Activated CD4-positive, alpha-beta T cell treated with anti-CD3 and anti-CD28 coated beads, Interleukin-2, amount 10 ng/mL, durations not matched to agents 24 days and 14 days (primary cell): ENCODE measurements at regions of chr16 and their contacts with region 1.

Region 1: GRCh38 chr16:23877107-23878090 is 41.6 kb downstream of the PRKCB start:
- DNase-seq: no peak
- H3K4me3 Mint-ChIP-seq: no peak overlapping the region
- H3K27ac Mint-ChIP-seq: no peak overlapping the region
- H3K4me1 Mint-ChIP-seq: peaks cover 54% of the 10 kb centered on the region
- H3K27me3 Mint-ChIP-seq: no peaks in the 10 kb centered on the region

Region 2: DNA sequence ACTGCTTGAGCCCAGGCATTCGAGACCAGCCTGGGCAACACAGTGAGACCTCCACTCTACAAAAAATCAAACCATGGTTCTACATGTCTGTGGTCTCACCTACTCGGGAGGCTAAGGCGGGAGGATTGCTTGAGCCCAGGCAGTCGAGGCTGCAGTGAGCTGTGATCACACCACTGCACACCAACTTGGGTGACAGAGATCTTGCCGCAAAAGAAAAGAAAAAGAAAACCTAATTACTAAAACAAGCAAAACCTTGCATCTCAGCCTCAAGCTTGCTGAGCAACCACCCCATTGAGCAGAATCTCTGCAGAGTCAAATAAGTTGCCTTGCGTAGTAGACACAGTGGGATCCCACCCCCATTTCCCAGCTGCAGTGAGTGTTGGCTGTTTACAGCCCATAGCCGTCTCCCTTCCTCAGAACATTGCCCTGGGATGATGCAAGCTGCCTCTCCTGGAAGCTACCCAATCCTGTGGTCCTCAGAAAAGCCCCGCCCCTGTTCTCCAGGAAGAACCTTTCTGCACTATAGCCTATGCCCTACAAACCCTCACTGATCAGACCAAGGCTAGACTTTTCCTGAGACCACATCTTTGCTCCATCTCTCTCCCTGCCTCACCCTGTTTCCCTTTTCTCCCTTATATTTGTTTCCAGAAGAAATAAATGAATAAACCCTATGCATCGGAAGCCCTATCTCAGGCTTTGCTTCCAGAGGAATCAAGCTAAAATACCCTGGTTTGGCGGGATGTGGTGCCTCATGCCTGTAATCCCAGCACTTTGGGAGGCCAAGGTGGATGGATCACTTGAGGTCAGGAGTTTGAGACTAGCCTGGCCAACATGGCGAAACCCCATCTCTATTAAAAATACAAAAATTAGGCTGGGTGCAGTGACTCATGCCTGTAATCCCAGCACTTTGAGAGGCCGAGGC is 147.6 kb before region 1 on chr16:
- intact Hi-C with region 1: no loop called
- DNase-seq: no peak
- H3K4me3 Mint-ChIP-seq: no peak overlapping the region
- H3K27ac Mint-ChIP-seq: no peak overlapping the region
- H3K4me1 Mint-ChIP-seq: peaks cover 2% of the 10 kb centered on the region
- H3K27me3 Mint-ChIP-seq: peaks cover 9% of the 10 kb centered on the region

Region 3: GRCh38 chr16:23826528-23827045 is 50.8 kb before region 1 on chr16:
- intact Hi-C with region 1: loop called (anchors 1 kb)
- DNase-seq: peak; percentile 77
- H3K4me3 Mint-ChIP-seq: peak overlapping the region; percentile 41
- H3K27ac Mint-ChIP-seq: peak overlapping the region; percentile 52
- H3K4me1 Mint-ChIP-seq: peaks cover 26% of the 10 kb centered on the region
- H3K27me3 Mint-ChIP-seq: no peaks in the 10 kb centered on the region

Region 4: DNA sequence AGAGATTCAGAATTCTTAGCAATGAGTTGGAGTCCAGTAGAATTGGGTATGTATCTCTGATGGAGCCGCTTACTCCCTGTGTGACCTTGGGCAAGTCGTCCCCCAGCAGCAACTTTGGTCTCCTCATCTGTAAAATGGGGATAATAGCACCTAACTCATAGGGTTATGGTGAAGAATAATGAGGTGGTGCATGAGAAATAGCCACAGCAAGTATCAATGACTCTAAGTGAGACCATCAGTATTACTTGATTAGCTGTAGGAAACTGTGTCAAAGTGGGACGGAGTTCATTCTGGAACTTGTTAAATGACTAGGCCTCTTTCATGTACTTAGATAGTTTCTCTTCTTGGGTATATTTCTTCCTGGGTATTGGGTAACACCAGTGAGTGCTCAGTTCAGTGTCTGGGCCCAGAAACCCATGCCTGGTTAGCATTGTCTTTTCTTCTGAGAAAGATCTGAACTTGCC is 35.2 kb before region 1 on chr16:
- intact Hi-C with region 1: loop called (anchors 1 kb)
- DNase-seq: peak; percentile 73
- H3K4me3 Mint-ChIP-seq: peak overlapping the region; percentile 28
- H3K27ac Mint-ChIP-seq: peak overlapping the region; percentile 87
- H3K4me1 Mint-ChIP-seq: peaks cover 70% of the 10 kb centered on the region
- H3K27me3 Mint-ChIP-seq: no peaks in the 10 kb centered on the region

Region 5: DNA sequence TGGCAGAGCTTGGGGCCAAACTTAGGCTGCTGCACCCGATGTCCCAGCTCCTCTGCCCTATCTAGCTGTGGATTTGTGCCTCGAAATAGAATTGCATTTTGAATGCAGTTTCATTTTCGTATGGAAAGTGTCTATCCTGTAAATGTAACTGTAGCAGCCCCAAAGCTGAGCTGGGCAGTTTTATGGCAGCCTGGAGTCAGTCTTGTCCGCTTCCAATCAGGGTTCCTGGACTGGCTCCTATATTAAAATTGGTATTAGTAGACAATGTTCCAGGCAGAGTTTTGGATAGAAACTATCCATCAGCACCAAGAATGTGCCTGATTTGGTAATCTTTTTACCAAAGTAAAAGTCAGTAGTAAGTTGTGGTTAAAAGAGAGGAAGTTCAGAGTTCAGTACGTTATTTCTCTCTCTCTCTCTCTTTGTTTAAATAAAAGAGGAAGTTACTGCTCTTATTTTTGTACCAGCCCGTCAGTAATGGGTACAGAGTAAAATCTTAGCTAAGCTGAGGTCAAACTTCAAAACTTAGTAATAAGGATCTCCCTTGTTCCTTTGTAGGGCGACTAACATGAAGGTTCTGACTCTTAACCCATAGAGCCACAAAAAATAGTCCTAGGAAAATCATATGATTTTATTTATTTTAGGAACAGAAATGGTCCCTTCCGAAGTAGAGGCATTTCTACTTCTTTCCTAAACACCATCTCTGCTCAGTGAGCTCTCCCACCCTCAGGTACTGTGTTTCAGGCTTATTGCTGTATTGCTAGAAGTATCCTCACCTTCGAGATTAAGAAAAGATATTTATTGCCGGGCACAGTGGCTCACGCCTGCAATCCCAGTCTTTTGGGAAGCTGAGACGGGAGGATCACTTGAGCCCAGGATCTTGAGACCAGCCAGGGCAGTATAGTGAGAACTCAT is 13.6 kb before region 1 on chr16:
- intact Hi-C with region 1: loop called (anchors 2 kb)
- DNase-seq: peak; percentile 83
- H3K4me3 Mint-ChIP-seq: peak overlapping the region; percentile 80
- H3K27ac Mint-ChIP-seq: peak overlapping the region; percentile 90
- H3K4me1 Mint-ChIP-seq: peaks cover 62% of the 10 kb centered on the region
- H3K27me3 Mint-ChIP-seq: no peaks in the 10 kb centered on the region